ENCODE measurements at regions of chr6 and their contacts with region 1.

Region 1: DNA sequence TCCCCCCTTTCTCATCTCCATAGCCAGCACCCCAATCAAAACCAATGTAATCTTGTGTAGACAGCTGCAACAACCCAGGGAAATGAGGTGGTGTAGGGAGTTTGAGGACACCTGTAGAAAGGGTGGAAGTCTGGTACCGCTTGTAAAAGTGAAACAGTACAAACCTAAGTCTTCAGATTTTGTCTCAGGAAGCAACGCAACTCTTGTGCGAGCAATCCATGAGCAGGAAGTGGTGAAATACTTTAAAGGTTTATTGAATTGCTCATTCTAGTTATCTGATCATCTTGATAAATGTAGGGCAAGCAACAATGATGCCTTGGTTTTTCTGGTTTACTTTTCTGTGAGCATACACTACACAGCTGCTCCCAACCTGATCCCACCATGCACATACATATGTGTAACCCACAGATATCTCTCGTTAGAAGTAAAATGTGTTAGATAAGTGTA is 71.1 kb upstream of the THEMIS start:
- DNase-seq: peak; percentile 62
- H3K4me3 Mint-ChIP-seq: peak overlapping the region; percentile 72
- H3K27ac Mint-ChIP-seq: peak overlapping the region; percentile 88
- H3K4me1 Mint-ChIP-seq: peaks cover 63% of the 10 kb centered on the region
- H3K27me3 Mint-ChIP-seq: no peaks in the 10 kb centered on the region

Region 2: GRCh38 chr6:127397729-127398630 is 574.0 kb before region 1 on chr6:
- CTCF ChIA-PET with region 1: no interaction called
- intact Hi-C with region 1: no loop called
- DNase-seq: no peak
- H3K4me3 Mint-ChIP-seq: no peak overlapping the region
- H3K27ac Mint-ChIP-seq: no peak overlapping the region
- H3K4me1 Mint-ChIP-seq: peaks cover 2% of the 10 kb centered on the region
- H3K27me3 Mint-ChIP-seq: no peaks in the 10 kb centered on the region

Region 3: DNA sequence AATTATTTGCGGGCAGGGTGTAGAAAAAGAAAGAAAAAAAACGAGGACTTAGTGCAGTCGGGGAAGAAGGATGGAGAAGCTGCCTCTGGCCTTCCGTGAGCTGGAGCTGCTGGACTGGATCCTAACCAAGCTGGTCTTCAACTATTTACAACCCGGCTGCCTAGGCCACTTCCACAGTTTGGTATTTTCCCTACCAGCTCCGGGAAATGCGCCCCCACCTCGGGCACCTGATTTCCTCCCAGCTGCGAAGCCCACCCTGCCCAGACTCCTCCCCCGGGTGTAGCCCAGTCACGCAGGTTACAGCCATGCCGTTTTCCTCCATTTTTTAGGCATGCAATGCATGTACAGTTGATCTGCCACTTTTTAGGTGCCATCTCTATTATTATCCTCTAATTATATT is 92.3 kb before region 1 on chr6:
- CTCF ChIA-PET with region 1: no interaction called
- intact Hi-C with region 1: loop called (anchors 1 kb)
- DNase-seq: peak; percentile 36
- H3K4me3 Mint-ChIP-seq: peak overlapping the region; percentile 67
- H3K27ac Mint-ChIP-seq: peak overlapping the region; percentile 56
- H3K4me1 Mint-ChIP-seq: peaks cover 70% of the 10 kb centered on the region
- H3K27me3 Mint-ChIP-seq: no peaks in the 10 kb centered on the region

Region 4: DNA sequence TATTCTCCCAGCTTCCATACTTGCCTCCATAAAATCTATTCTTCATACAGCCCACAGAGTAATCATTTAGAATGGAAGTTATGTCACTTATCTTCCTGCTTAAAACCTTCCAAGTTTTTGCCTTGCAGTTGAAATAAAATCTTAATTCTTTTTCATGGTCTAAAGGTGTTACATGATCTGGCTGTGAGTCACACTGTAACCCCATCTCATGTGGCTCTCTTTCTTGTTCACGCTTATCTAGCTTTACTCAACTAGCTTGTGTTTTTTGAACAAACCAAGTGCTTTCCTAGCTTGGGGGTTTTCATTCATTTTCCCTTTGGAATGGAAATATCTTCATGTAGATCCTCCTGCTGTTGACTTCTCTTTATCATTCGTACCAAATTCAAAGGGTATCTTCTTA is 47.5 kb before region 1 on chr6:
- CTCF ChIA-PET with region 1: no interaction called
- intact Hi-C with region 1: loop called (anchors 1 kb)
- DNase-seq: peak; percentile 40
- H3K4me3 Mint-ChIP-seq: peak overlapping the region; percentile 5
- H3K27ac Mint-ChIP-seq: peak overlapping the region; percentile 61
- H3K4me1 Mint-ChIP-seq: peaks cover 59% of the 10 kb centered on the region
- H3K27me3 Mint-ChIP-seq: no peaks in the 10 kb centered on the region

Region 5: DNA sequence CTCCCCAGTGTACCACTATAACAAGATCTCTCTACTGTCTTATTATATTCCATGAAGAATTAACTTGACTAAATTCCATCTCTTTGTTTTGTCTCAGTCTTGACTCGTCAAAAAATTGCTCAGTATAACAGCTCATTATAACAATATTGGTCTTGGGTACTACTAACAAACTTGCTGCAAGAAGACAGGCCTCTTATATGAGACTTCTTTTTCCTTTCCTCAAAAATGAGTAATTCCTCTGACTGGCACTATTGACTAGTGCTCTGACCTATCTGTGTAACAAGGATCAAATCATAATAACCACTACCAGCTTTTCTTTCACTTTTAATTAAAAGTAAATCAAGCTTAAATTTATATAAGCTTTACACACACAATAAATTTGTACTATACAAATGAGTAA is 20.2 kb after region 1 on chr6:
- CTCF ChIA-PET with region 1: interaction called, 3 read pairs
- intact Hi-C with region 1: loop called (anchors 1 kb)
- DNase-seq: no peak
- H3K4me3 Mint-ChIP-seq: no peak overlapping the region
- H3K27ac Mint-ChIP-seq: no peak overlapping the region
- H3K4me1 Mint-ChIP-seq: peaks cover 16% of the 10 kb centered on the region
- H3K27me3 Mint-ChIP-seq: no peaks in the 10 kb centered on the region

Region 6: DNA sequence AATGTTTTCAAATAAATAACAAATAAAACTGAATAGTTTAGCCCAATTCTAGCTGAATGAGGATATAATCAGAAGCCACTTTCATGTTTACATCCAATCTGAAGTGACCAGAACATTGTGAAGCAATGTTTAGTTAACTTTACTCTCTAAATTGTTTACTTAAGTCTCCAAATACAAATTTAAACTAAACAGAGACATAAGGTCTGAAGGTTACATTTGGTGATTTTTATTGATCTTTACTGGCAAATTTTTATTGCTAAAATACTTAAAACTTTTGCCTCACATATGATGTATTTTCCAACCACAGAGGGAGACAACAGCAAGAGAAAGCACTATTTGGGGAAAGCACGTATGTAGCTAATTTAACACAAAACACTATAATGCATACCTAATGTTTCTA is 35.7 kb after region 1 on chr6:
- CTCF ChIA-PET with region 1: no interaction called
- intact Hi-C with region 1: no loop called
- DNase-seq: no peak
- H3K4me3 Mint-ChIP-seq: no peak overlapping the region
- H3K27ac Mint-ChIP-seq: no peak overlapping the region
- H3K4me1 Mint-ChIP-seq: peaks cover 2% of the 10 kb centered on the region
- H3K27me3 Mint-ChIP-seq: no peaks in the 10 kb centered on the region

Region 7: DNA sequence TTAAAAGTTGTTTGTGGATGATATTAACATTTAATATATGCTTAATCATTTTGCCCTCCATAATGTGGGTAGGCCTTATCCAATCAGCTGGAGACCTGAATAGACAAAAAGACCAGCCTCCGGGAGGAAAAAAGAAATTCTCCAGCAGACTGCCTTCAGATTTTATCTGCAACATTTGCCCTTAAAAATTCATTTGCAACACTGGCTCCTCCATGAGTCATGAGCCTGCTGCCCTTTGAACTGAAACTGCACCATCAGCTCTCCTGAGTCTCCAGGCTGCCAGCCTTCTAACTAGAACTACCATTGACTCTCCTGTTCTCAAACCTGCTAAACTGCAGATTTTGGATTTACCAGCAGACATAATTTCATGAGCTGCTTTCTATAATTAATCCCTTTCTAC is 152.7 kb after region 1 on chr6:
- CTCF ChIA-PET with region 1: no interaction called
- intact Hi-C with region 1: no loop called
- DNase-seq: peak; percentile 23
- H3K4me3 Mint-ChIP-seq: no peak overlapping the region
- H3K27ac Mint-ChIP-seq: no peak overlapping the region
- H3K4me1 Mint-ChIP-seq: peaks cover 7% of the 10 kb centered on the region
- H3K27me3 Mint-ChIP-seq: no peaks in the 10 kb centered on the region

Region 8: DNA sequence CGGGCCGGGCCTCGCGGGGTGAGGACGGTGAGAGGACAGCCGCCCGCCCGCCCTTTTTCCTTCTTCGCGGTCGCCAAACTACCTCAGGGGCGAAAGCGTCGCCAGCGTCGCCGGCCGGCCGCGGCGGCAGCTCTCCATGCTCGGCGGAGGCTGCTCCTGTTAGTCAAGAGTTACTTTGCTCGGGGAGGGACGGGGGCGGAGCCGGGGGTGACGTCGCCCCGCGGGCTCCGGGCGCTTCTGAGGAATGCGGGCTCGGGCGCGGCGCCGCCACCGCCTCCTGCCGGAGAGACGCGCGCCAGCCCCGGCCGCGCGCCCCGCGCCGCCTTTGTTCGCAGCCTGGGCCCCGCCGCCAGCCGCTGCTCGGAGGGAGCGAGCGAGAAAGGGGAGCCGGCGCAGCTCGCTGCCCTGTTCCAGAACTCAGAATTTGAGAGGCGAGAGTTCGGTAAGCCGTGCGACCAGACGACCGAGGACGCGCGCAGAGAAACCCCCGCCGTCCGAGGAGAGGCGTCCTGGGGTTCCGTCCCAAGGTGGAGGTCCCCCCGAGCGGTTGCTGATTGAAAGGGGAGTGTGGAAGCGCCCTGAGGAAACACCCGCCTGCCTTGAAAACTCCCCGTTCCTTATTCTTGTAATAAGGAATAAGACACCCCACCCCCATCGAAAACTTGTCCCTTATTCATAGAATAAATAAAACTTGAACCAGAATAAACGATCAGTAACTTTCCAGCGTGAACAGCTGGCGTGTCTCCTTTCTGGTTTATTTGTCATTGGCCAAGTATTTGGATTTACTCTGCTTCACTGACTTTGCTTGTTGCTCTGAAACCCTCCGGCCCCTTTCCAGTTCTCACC is 548.7 kb after region 1 on chr6 and contains the start of gene PTPRK:
- CTCF ChIA-PET with region 1: no interaction called
- intact Hi-C with region 1: loop called (anchors 1 kb)
- DNase-seq: peak; percentile 92
- H3K4me3 Mint-ChIP-seq: peak within 1 kb of the TSS; percentile 91
- H3K27ac Mint-ChIP-seq: peak within 1 kb of the TSS; percentile 63
- H3K4me1 Mint-ChIP-seq: peaks cover 8% of the 10 kb centered on the region
- H3K27me3 Mint-ChIP-seq: peaks cover 34% of the 10 kb centered on the region
- total RNA-seq, gene PTPRK: 5.5 to 8.0 TPM

Measured in activated naive CD4-positive, alpha-beta T cell treated with anti-CD3 and anti-CD28 coated beads for 36 hours (primary cell).